Pancreas (tissue), 10 donors: ENCODE measurements at regions of chr9 and their contacts with region 1.

Region 1: DNA sequence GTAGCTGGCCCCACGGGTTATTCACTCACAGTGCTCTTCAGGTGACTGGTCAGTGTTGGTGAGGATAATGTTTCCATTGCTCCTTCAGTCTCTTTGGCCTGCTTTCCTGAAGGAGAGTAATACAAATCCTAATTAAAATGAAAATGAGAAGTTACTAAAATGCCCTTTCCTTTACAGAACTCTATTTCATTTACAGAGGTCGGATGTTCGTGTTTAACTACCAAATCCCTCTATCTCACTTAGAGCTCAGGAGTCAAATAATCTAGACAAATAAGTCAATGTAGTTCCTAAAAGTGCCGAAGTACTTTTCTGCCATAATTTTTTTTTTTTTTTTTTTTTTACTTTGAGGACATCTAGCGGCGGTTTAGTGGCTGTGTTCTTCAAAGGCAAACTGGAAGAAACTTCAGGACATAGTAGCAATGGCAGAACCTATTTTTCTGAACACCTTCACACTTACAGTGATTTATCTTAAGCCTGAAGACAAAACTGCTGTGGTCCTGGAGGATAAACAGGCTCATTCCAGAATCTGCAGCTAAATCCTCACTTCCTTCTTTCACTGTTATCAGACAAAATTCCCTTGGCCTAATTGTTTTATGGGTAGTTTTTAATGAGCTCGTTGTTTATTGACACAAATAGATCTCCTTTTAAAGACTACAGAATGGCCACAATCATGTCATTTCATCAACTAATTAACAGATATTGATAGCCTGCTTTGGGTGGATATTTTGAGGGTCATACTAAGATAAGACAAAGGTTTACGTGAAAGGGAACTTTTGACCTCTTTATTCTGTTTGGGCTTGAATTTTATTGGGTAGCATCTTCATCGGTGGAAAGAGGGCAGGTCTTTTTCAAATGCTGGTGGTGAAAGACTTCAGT is 207.6 kb upstream of the DMRTA1 start:
- DNase-seq: no peak
- ATAC-seq: peak; percentile 48 to 79 (median 76)
- H3K4me3 ChIP-seq: no peak overlapping the region
- H3K27ac ChIP-seq: peak overlapping the region in 1 of 4 donors; percentile 17
- H3K4me1 ChIP-seq: no peaks in the 10 kb centered on the region
- H3K27me3 ChIP-seq: no peaks in the 10 kb centered on the region
- CTCF ChIP-seq: peak in 2 of 4 donors; percentile 16 to 38

Region 2: DNA sequence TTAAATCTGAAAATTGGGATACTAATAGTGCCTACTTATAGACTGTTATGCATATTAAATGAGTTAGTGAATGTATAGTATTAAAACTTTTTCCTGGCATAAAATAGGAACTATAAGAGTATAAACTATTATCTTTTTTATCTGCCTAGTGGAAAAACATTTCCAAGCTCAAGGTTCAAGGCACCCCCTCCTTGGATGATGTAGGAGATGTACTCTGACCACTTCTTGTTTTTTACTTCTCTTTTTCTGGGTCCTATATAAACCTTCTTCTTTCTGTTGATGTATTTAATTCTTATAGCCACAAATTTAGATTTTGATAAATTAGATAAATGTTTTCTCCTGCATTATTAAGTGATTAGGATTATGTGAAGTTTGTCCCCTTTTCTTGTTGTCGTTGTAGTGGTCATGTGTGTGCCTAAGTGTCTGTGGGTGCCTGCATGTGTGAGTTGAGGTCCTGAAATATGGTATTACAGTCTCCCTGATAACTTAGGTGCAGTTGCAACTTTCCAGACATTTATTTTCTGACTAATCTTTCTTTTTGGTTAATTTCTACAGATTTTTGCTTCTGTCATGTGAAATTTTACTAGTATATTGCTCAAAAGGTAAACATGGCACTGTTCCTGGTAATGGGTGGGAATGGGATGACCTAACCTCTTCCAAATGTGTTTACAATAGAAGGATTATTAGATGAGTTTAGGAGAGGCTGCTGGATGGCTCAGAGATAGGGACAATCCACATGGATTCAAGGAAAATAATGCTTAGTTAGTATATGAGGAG is 69.1 kb before region 1 on chr9:
- intact Hi-C with region 1: loop called in 1 of 3 experiments (anchors 10 kb)
- DNase-seq: no peak
- ATAC-seq: peak in 2 of 4 donors; percentile 43 to 60
- H3K4me3 ChIP-seq: no peak overlapping the region
- H3K27ac ChIP-seq: no peak overlapping the region
- H3K4me1 ChIP-seq: no peaks in the 10 kb centered on the region
- H3K27me3 ChIP-seq: peaks cover 0 to 4% (median 0%) of the 10 kb centered on the region in 4 donors
- CTCF ChIP-seq: no peak